Left cardiac atrium (tissue), 4 donors: ENCODE measurements at regions of chr6 and their contacts with region 1.

Region 1: DNA sequence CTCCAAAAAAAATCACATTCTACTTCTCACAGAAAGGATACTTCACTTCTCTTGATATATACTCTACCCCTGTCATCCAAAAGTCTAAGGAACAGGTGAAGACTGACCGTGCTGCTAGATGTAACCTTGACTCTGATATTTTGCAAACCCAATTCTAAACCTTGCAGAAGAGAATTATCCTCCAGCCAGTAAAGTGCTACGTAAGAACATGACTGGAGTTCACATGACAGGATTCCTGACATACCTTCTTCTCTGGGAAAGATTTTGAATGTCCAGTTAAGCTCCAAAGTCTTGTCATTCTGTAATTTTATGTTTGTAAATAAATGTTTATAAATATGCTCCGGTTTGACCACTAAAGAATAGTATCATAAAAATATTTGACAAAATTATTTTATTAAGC is 35.8 kb downstream of the BTBD9 start:
- DNase-seq: no peak
- ATAC-seq: peak in 1 of 2 donors; percentile 39

Region 2: GRCh38 chr6:37741757-37742400 is 862.1 kb before region 1 on chr6:
- intact Hi-C with region 1: no loop called
- DNase-seq: no peak
- ATAC-seq: peak; percentile 54 to 78

Region 3: GRCh38 chr6:38404900-38405556 is 198.9 kb before region 1 on chr6:
- intact Hi-C with region 1: no loop called
- DNase-seq: no peak
- ATAC-seq: peak; percentile 32 to 55

Region 4: DNA sequence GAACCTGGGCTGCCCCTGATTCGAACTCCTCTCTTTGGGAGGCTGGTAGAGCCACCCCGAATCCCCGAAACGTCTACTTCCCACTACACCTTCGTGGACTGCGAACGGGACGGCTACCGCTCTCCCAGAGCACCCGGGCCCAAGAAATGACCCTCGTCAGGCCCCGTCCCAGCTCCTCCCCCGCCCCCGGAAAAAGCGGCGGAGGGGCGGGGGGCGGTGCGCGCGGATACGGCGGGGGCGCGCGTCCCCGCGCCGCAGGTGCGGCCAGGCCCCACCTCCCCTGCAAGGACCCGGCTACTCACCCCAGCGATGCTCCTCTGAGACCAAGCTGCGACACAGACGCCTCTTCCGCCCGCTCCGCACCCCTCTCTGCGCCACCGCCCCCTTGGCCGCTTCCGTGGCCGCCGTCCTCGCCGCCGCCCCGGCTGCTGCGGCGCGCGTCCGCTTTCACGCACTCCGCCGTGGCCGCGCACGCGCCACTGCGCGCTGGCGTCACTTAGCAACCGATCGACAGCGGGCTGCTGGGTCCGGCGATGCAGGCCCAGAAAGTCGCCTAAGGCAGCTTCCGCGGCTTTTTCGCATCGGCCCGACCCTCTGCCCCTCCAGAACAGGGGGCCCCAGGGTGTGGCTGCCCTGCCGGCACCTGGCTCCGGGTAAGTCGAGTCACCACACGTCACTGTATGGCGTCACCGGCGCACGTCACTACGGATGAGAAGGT is 35.7 kb after region 1 on chr6 and contains the start of gene BTBD9:
- intact Hi-C with region 1: loop called in 1 of 2 experiments (anchors 5 kb)
- DNase-seq: peak; percentile 88
- ATAC-seq: peak; percentile 94 to 95
- total RNA-seq, gene BTBD9: 19.0 to 33.2 TPM